ENCODE measurements at regions of chr1 and their contacts with region 1.

Region 1: GRCh38 chr1:203486618-203487370 is 7.2 kb upstream of the OPTC start:
- DNase-seq: no peak
- ATAC-seq: no peak
- H3K4me3 Mint-ChIP-seq: peak overlapping the region; percentile 61
- H3K27ac Mint-ChIP-seq: peak overlapping the region; percentile 31
- H3K4me1 Mint-ChIP-seq: no peaks in the 10 kb centered on the region
- H3K27me3 Mint-ChIP-seq: no peaks in the 10 kb centered on the region

Region 2: GRCh38 chr1:203290261-203291089 is 196.3 kb before region 1 on chr1:
- CTCF ChIA-PET with region 1: interaction called, 12 read pairs
- POLR2A ChIA-PET with region 1: no interaction called
- DNase-seq: peak; percentile 97
- ATAC-seq: peak; percentile 51
- H3K4me3 Mint-ChIP-seq: peak overlapping the region; percentile 81
- H3K27ac Mint-ChIP-seq: peak overlapping the region; percentile 99
- H3K4me1 Mint-ChIP-seq: peaks cover 86% of the 10 kb centered on the region
- H3K27me3 Mint-ChIP-seq: no peaks in the 10 kb centered on the region

Region 3: GRCh38 chr1:203475012-203475981 is 11.5 kb before region 1 on chr1 and contains the start of gene PRELP:
- CTCF ChIA-PET with region 1: interaction called, 48 read pairs
- POLR2A ChIA-PET with region 1: no interaction called
- DNase-seq: no peak
- ATAC-seq: no peak
- H3K4me3 Mint-ChIP-seq: no peak within 1 kb of the TSS
- H3K27ac Mint-ChIP-seq: no peak within 1 kb of the TSS
- H3K4me1 Mint-ChIP-seq: peaks cover 2% of the 10 kb centered on the region
- H3K27me3 Mint-ChIP-seq: peaks cover 15% of the 10 kb centered on the region
- total RNA-seq, gene PRELP: not detected

Region 4: DNA sequence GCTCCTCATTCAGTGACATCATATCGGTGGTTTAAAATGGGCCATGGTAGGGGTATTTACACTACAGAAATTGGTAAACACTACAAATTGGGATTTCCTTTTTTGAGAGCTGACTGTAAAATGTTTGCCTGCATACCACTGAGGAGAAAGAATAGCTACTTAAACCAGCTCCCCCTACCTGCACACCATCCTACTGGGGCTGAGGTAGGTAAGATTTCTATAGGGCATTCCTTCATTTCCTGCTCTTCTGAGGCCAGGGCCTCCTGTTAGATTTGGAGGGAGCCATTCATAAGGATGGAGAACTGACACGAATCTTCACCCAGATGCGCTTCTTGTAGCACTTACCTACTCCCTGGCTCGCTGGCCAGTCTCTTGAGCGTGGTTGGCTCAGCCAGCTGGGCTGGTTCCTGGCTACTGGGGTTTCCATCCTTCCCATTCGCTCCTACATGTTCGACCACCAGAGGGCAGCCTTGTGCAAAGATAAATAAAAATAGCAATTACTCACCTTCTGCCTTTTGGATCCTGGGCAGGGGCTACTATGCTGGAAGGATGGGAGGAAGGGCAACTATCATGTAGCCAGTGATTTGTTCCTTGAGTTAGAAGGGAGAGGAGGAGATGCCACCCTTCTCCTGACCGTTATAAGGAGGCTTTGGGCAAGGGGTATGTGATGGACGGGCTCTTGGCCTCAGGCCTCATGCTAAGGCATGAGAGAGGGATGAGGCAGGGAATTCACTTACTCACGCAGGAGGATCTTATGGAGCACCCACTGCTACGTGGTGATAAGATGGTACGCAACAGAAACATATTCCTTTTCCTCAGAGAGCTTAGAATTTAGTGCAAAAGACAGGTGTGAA is 17.8 kb after region 1 on chr1:
- CTCF ChIA-PET with region 1: interaction called, 13 read pairs
- POLR2A ChIA-PET with region 1: no interaction called
- DNase-seq: peak; percentile 85
- ATAC-seq: peak; percentile 83
- H3K4me3 Mint-ChIP-seq: no peak overlapping the region
- H3K27ac Mint-ChIP-seq: no peak overlapping the region
- H3K4me1 Mint-ChIP-seq: peaks cover 6% of the 10 kb centered on the region
- H3K27me3 Mint-ChIP-seq: peaks cover 5% of the 10 kb centered on the region

Region 5: GRCh38 chr1:203569490-203570318 is 82.9 kb after region 1 on chr1:
- CTCF ChIA-PET with region 1: no interaction called
- POLR2A ChIA-PET with region 1: no interaction called
- DNase-seq: no peak
- ATAC-seq: no peak
- H3K4me3 Mint-ChIP-seq: no peak overlapping the region
- H3K27ac Mint-ChIP-seq: no peak overlapping the region
- H3K4me1 Mint-ChIP-seq: no peaks in the 10 kb centered on the region
- H3K27me3 Mint-ChIP-seq: peaks cover 6% of the 10 kb centered on the region